ENCODE measurements at regions of chrX and their contacts with region 1.

Region 1: DNA sequence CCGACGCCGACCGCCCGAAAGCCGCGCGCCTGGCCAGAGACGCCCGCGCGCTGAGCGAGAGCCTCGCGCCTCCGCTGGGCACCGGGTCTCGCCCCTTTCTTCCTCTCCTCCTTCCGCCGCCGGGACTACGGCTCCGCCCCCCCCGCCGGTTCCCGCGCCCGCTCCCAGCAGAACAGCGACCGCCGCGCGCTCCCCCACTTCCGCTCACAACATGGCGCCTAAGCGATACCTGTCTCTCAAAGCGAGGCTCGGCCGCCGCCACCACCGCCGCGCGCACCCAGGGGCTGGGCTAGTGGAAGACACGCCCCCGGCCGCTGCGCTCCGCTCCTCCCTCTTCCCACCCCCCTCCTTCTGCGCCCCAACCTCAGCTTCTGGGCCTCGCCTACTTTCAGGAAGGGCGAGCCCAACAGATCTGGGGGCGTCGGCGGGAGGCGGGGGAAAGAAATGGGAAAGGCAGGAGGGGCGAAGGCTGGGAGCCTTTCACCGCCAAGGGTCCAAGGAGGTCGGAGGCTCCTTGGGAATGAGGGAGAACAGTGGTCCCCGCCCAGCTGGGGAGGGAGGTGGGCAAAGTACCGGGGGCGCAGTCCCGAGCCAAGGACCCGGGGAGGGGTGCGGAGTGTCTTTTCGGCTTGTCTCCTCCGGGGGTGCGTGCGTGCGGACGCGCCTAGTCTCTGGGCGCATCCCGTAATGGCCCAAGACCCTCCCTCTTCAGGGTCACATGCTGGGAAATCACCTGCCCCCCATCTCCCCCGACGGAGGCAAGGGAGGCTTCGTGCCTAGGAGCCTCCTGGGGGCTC is at the start of gene RPS6KA3:
- DNase-seq: peak; percentile 85
- H3K4me3 ChIP-seq: peak within 1 kb of the TSS; percentile 75
- H3K27ac ChIP-seq: peak within 1 kb of the TSS; percentile 61
- H3K4me1 ChIP-seq: no peaks in the 10 kb centered on the region
- H3K27me3 ChIP-seq: peaks cover 5% of the 10 kb centered on the region
- CTCF ChIP-seq: no peak
- total RNA-seq, gene RPS6KA3: 32.3 and 33.6 TPM in 2 replicates

Region 2: DNA sequence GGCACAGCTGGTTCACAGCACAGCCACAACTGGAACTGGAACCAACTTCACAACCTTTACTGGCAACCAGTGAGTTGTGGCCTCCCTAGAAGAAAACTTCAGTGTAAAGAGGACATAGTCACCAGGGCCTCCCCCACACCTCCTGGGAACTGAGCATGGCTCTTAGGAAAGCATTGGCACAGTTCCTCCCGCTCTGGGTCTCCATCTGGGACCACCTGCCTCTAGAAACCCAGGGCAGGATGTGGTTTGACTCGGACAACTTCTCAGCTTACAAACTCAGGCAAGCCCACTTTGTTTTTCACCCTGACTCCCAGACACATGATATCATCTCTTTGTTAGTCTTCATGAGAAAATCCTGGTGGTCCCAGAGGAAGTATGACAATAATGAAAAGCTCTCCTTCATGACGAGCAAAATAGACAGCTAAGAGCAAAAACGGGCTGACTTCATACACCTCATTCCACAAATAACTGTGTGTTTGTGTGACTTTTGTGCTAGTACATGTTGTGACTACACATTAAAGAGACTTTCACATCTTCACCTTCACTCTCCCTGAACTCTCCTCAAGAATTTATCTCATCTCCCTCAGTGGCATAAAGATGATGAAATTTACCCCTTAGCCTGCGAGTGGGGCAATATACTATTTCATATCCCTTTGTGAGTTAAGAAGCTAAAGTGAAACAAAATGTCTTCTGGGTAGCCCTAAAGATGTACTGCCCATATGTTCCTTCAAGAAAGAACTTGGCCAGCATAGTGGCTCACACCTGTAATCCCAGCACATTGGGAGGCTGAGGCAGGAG is 455.0 kb before region 1 on chrX:
- CTCF ChIA-PET with region 1: no interaction called
- POLR2A ChIA-PET with region 1: no interaction called
- intact Hi-C with region 1: no loop called
- DNase-seq: no peak
- H3K4me3 ChIP-seq: no peak overlapping the region
- H3K27ac ChIP-seq: no peak overlapping the region
- H3K4me1 ChIP-seq: peaks cover 10% of the 10 kb centered on the region
- H3K27me3 ChIP-seq: peaks cover 4% of the 10 kb centered on the region
- CTCF ChIP-seq: no peak

Region 3: GRCh38 chrX:20244931-20245330 is 22.1 kb before region 1 on chrX:
- CTCF ChIA-PET with region 1: interaction called, 4 read pairs
- POLR2A ChIA-PET with region 1: interaction called, 11 read pairs
- intact Hi-C with region 1: no loop called
- DNase-seq: no peak
- H3K4me3 ChIP-seq: no peak overlapping the region
- H3K27ac ChIP-seq: no peak overlapping the region
- H3K4me1 ChIP-seq: no peaks in the 10 kb centered on the region
- H3K27me3 ChIP-seq: no peaks in the 10 kb centered on the region
- CTCF ChIP-seq: no peak

Region 4: DNA sequence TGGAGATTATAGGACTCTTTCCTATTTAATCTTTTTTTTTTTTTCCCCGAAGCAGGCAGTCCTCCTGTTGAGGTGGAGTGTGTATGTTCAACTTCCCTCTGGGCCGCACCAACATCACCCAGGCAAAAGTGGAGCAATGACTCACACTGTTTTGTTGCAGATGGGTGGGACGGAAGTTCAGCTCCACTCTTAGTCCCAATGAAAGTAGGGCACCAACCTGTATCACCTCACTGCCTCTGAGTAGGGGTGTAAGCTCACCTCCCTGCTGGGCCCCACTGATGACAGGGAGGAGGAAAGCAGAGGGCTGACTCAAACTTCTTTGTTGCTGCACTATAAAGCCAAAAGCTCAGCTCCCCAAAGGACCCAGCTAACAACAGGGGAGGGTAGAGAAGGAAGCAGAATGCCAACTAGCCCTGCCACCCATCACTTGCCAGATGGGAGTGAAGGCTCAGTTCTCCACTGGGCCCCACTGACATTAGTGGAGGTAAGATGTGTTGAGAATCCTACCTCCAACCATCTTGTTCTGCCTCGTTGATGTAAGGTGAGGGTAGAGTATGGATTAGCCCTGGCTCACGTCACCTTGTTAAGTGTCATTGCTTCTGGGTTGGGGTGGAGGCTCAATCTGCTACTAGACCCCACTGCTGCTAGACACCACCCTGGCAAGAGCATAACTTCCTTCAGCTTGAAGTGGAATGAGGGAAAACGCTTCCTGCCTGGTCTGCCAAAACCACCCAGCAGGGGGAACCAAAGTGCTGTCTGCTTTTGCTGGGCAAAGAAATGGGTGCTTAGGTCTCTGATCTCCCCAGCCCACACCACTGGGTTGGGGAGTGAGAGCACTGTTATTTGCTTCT is 14.4 kb before region 1 on chrX:
- CTCF ChIA-PET with region 1: interaction called, 10 read pairs
- POLR2A ChIA-PET with region 1: no interaction called
- intact Hi-C with region 1: no loop called
- DNase-seq: peak; percentile 68
- H3K4me3 ChIP-seq: no peak overlapping the region
- H3K27ac ChIP-seq: no peak overlapping the region
- H3K4me1 ChIP-seq: no peaks in the 10 kb centered on the region
- H3K27me3 ChIP-seq: no peaks in the 10 kb centered on the region
- CTCF ChIP-seq: peak; percentile 74

Region 5: GRCh38 chrX:20330545-20330944 is 63.5 kb after region 1 on chrX:
- CTCF ChIA-PET with region 1: no interaction called
- POLR2A ChIA-PET with region 1: interaction called, 11 read pairs
- intact Hi-C with region 1: no loop called
- DNase-seq: no peak
- H3K4me3 ChIP-seq: no peak overlapping the region
- H3K27ac ChIP-seq: no peak overlapping the region
- H3K4me1 ChIP-seq: no peaks in the 10 kb centered on the region
- H3K27me3 ChIP-seq: no peaks in the 10 kb centered on the region
- CTCF ChIP-seq: no peak